ENCODE measurements at regions of chr9 and their contacts with region 1.

Region 1: GRCh38 chr9:134449221-134449894 is 123.1 kb downstream of the RXRA start:
- DNase-seq: peak; percentile 91
- ATAC-seq: peak; percentile 100
- H3K4me3 ChIP-seq: no peak overlapping the region
- H3K4me3 Mint-ChIP-seq: no peak overlapping the region
- H3K27ac ChIP-seq: no peak overlapping the region
- H3K27ac Mint-ChIP-seq: peak overlapping the region; percentile 46
- H3K4me1 ChIP-seq: peaks cover 0 to 11% of the 10 kb centered on the region in 2 donors
- H3K4me1 Mint-ChIP-seq: peaks cover 18% of the 10 kb centered on the region
- H3K27me3 ChIP-seq: peaks cover 0 to 3% (median 0%) of the 10 kb centered on the region in 4 experiments
- H3K27me3 Mint-ChIP-seq: no peaks in the 10 kb centered on the region
- CTCF ChIP-seq: peak; percentile 81

Region 2: GRCh38 chr9:134175808-134176598 is 273.4 kb before region 1 on chr9:
- CTCF ChIA-PET with region 1: interaction called, 59 read pairs
- POLR2A ChIA-PET with region 1: no interaction called
- intact Hi-C with region 1: no loop called
- DNase-seq: no peak
- ATAC-seq: no peak
- H3K4me3 ChIP-seq: no peak overlapping the region
- H3K4me3 Mint-ChIP-seq: no peak overlapping the region
- H3K27ac ChIP-seq: no peak overlapping the region
- H3K27ac Mint-ChIP-seq: no peak overlapping the region
- H3K4me1 ChIP-seq: peaks cover 21 to 23% of the 10 kb centered on the region in 2 donors
- H3K4me1 Mint-ChIP-seq: peaks cover 20% of the 10 kb centered on the region
- H3K27me3 ChIP-seq: peaks cover 0 to 28% (median 8%) of the 10 kb centered on the region in 4 experiments
- H3K27me3 Mint-ChIP-seq: peaks cover 23% of the 10 kb centered on the region
- CTCF ChIP-seq: no peak

Region 3: DNA sequence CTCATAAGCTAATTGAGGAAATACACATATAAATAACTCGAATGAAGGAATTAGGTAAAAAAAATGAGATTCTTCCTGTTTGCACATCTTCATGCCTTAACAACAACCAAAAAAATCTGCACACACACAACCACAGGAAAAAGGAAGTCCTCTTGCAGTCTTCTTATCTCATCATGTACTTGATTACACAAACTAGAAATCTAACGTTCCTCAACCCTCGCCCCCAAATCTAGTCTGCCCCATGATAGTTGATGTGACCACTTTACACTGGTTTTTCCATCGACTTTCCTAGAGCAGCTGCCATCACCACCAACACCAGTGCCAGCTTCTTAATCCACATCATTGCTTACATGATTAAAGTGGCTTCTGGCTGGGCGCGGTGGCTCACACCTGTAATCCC is 253.8 kb before region 1 on chr9:
- CTCF ChIA-PET with region 1: no interaction called
- POLR2A ChIA-PET with region 1: no interaction called
- intact Hi-C with region 1: no loop called
- DNase-seq: no peak
- ATAC-seq: no peak
- H3K4me3 ChIP-seq: no peak overlapping the region
- H3K4me3 Mint-ChIP-seq: peak overlapping the region; percentile 23
- H3K27ac ChIP-seq: no peak overlapping the region
- H3K27ac Mint-ChIP-seq: peak overlapping the region; percentile 12
- H3K4me1 ChIP-seq: peaks cover 5 to 10% of the 10 kb centered on the region in 2 donors
- H3K4me1 Mint-ChIP-seq: peaks cover 5% of the 10 kb centered on the region
- H3K27me3 ChIP-seq: no peaks in the 10 kb centered on the region
- H3K27me3 Mint-ChIP-seq: peaks cover 13% of the 10 kb centered on the region
- CTCF ChIP-seq: no peak

Region 4: GRCh38 chr9:134325817-134326723 is 123.3 kb before region 1 on chr9 and contains the start of gene RXRA:
- CTCF ChIA-PET with region 1: interaction called, 3 read pairs
- POLR2A ChIA-PET with region 1: no interaction called
- intact Hi-C with region 1: loop called (anchors 10 kb)
- DNase-seq: peak; percentile 83
- ATAC-seq: peak; percentile 77
- H3K4me3 ChIP-seq: peak within 1 kb of the TSS; percentile 17 to 85 (median 78)
- H3K4me3 Mint-ChIP-seq: peak within 1 kb of the TSS; percentile 82
- H3K27ac ChIP-seq: no peak within 1 kb of the TSS
- H3K27ac Mint-ChIP-seq: peak within 1 kb of the TSS; percentile 68
- H3K4me1 ChIP-seq: peaks cover 11 to 20% of the 10 kb centered on the region in 2 donors
- H3K4me1 Mint-ChIP-seq: peaks cover 17% of the 10 kb centered on the region
- H3K27me3 ChIP-seq: peaks cover 0 to 13% (median 3%) of the 10 kb centered on the region in 4 experiments
- H3K27me3 Mint-ChIP-seq: no peaks in the 10 kb centered on the region
- CTCF ChIP-seq: no peak
- total RNA-seq, gene RXRA: 6.7 and 6.8 TPM in 2 replicates

Region 5: GRCh38 chr9:134386951-134387831 is 62.2 kb before region 1 on chr9:
- CTCF ChIA-PET with region 1: no interaction called
- POLR2A ChIA-PET with region 1: no interaction called
- intact Hi-C with region 1: no loop called
- DNase-seq: no peak
- ATAC-seq: no peak
- H3K4me3 ChIP-seq: no peak overlapping the region
- H3K4me3 Mint-ChIP-seq: no peak overlapping the region
- H3K27ac ChIP-seq: no peak overlapping the region
- H3K27ac Mint-ChIP-seq: no peak overlapping the region
- H3K4me1 ChIP-seq: peaks cover 34 to 46% of the 10 kb centered on the region in 2 donors
- H3K4me1 Mint-ChIP-seq: peaks cover 33% of the 10 kb centered on the region
- H3K27me3 ChIP-seq: no peaks in the 10 kb centered on the region
- H3K27me3 Mint-ChIP-seq: no peaks in the 10 kb centered on the region
- CTCF ChIP-seq: no peak

Region 6: DNA sequence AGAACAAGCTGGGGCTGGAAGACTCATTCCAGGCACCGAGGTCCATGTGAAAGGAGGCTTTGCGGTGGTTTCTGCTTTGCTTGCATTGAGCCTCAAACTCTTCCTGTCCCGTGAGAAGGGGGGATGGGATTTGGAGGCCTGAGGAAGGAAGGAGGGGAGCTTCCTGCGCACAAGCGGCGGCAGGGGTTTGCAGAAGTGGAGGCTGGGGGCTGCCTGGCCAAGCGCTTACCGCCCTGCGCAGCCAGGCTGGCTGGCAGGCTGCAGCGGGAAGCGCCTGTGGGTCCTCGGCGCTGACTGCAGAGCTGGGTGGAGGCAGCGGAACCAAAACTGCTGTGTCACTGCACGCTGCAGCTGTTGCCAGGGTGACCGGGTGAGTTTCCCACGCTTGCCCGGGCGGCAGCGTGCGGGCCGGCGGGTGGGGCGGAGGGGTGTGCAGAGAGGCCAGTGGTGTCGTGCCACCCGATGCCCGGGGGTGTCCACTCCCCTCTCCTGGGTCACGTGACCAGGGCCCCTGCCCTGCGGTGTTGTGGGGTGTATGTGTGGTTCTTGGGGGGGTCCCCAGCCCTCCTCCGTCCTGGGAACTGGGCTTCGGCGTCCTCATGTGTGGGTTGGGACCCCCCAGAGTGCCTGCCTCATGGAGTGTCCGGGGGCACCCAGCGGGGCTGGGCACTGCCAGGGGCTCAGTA is 42.1 kb before region 1 on chr9:
- CTCF ChIA-PET with region 1: interaction called, 3 read pairs
- POLR2A ChIA-PET with region 1: no interaction called
- intact Hi-C with region 1: loop called (anchors 1 kb)
- DNase-seq: peak; percentile 91
- ATAC-seq: peak; percentile 88
- H3K4me3 ChIP-seq: peak overlapping the region in 4 of 5 experiments; percentile 23 to 49 (median 30)
- H3K4me3 Mint-ChIP-seq: peak overlapping the region; percentile 73
- H3K27ac ChIP-seq: no peak overlapping the region
- H3K27ac Mint-ChIP-seq: peak overlapping the region; percentile 77
- H3K4me1 ChIP-seq: peaks cover 59 to 66% of the 10 kb centered on the region in 2 donors
- H3K4me1 Mint-ChIP-seq: peaks cover 46% of the 10 kb centered on the region
- H3K27me3 ChIP-seq: no peaks in the 10 kb centered on the region
- H3K27me3 Mint-ChIP-seq: no peaks in the 10 kb centered on the region
- CTCF ChIP-seq: no peak

Region 7: DNA sequence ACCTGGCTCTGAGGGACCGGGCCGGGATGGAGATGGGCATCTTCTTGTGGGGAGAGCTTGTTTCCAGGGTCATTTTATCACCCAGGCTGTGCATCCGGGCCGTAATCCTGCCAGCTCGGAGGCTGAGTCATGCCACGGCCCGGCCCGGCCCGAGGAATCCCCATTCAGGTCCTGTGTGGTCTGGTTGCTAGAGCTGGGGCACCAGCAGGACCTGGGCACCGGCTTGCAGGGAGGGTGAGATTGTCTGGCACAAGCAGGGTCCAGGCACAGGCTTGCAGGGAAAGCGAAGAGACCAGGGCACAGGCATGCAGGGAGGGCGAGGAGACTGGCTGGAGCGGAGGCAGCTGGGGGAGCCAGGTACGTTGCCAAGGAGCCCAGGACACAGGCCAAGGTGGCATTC is 16.3 kb before region 1 on chr9:
- CTCF ChIA-PET with region 1: no interaction called
- POLR2A ChIA-PET with region 1: no interaction called
- intact Hi-C with region 1: no loop called
- DNase-seq: no peak
- ATAC-seq: no peak
- H3K4me3 ChIP-seq: no peak overlapping the region
- H3K4me3 Mint-ChIP-seq: no peak overlapping the region
- H3K27ac ChIP-seq: no peak overlapping the region
- H3K27ac Mint-ChIP-seq: no peak overlapping the region
- H3K4me1 ChIP-seq: no peaks in the 10 kb centered on the region
- H3K4me1 Mint-ChIP-seq: no peaks in the 10 kb centered on the region
- H3K27me3 ChIP-seq: no peaks in the 10 kb centered on the region
- H3K27me3 Mint-ChIP-seq: no peaks in the 10 kb centered on the region
- CTCF ChIP-seq: no peak

Region 8: DNA sequence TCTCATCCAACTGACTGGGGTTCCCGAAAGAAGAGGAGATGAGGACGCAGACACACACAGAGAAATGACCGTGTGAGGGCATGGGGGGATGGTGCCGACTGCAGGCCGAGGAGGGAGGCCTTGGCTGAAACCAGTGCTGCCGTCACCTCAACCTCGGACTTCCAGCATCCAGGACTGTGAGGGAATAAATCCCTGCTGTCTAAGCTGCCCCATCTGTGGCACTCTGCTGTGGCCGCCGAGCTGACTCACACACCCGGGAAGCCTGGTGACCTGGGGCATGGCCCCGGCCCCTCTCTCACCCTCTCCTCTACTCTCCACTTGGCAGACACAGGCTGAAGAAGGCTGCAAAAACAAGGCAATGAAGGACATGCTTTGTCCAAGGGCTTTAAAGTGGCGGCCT is 187.9 kb after region 1 on chr9:
- CTCF ChIA-PET with region 1: no interaction called
- POLR2A ChIA-PET with region 1: no interaction called
- intact Hi-C with region 1: no loop called
- DNase-seq: no peak
- ATAC-seq: no peak
- H3K4me3 ChIP-seq: no peak overlapping the region
- H3K4me3 Mint-ChIP-seq: no peak overlapping the region
- H3K27ac ChIP-seq: no peak overlapping the region
- H3K27ac Mint-ChIP-seq: no peak overlapping the region
- H3K4me1 ChIP-seq: peaks cover 0 to 4% of the 10 kb centered on the region in 2 donors
- H3K4me1 Mint-ChIP-seq: peaks cover 6% of the 10 kb centered on the region
- H3K27me3 ChIP-seq: peaks cover 0 to 10% (median 2%) of the 10 kb centered on the region in 4 experiments
- H3K27me3 Mint-ChIP-seq: peaks cover 8% of the 10 kb centered on the region
- CTCF ChIP-seq: no peak

Region 9: GRCh38 chr9:134738869-134739659 is 289.7 kb after region 1 on chr9:
- CTCF ChIA-PET with region 1: interaction called, 19 read pairs
- POLR2A ChIA-PET with region 1: no interaction called
- intact Hi-C with region 1: no loop called
- DNase-seq: peak; percentile 33
- ATAC-seq: peak; percentile 31
- H3K4me3 ChIP-seq: no peak overlapping the region
- H3K4me3 Mint-ChIP-seq: no peak overlapping the region
- H3K27ac ChIP-seq: no peak overlapping the region
- H3K27ac Mint-ChIP-seq: no peak overlapping the region
- H3K4me1 ChIP-seq: no peaks in the 10 kb centered on the region
- H3K4me1 Mint-ChIP-seq: no peaks in the 10 kb centered on the region
- H3K27me3 ChIP-seq: peaks cover 0 to 4% (median 0%) of the 10 kb centered on the region in 4 experiments
- H3K27me3 Mint-ChIP-seq: no peaks in the 10 kb centered on the region
- CTCF ChIP-seq: peak; percentile 68

Region 10: DNA sequence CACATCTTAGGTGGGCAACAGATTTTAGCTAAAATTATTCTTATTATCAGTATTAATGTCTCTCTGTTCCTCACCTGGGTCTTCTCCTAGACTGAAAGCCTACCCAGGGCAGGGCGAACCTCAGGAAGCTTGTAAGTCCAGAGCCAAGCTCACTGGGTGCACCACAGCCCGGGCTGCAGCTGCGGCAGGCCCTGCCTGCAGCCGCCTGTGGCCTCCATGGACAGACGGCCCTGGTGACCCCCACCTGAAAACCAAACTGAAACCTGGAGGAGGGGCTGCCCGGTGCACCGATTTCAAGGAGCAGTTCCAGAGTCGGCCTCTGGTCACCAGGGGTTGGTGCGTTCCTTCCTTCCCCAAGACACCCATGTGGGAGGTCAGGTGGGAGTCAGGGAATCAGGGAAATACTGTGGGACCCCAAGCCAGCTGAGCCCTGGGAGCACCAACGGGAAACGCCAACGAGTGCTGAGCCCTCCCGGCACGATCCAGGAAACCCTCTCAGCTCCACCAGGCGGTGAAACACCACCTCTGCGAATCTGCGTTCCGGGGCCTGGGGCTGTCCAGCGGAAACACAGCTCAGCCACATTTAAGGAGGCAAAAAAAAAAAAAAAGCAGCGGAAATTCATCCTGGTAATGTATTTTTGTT is 961.6 kb after region 1 on chr9:
- CTCF ChIA-PET with region 1: interaction called, 34 read pairs
- POLR2A ChIA-PET with region 1: no interaction called
- intact Hi-C with region 1: no loop called
- DNase-seq: no peak
- ATAC-seq: no peak
- H3K4me3 ChIP-seq: no peak overlapping the region
- H3K4me3 Mint-ChIP-seq: no peak overlapping the region
- H3K27ac ChIP-seq: no peak overlapping the region
- H3K27ac Mint-ChIP-seq: no peak overlapping the region
- H3K4me1 ChIP-seq: no peaks in the 10 kb centered on the region
- H3K4me1 Mint-ChIP-seq: no peaks in the 10 kb centered on the region
- H3K27me3 ChIP-seq: peaks cover 0 to 13% (median 0%) of the 10 kb centered on the region in 4 experiments
- H3K27me3 Mint-ChIP-seq: peaks cover 16% of the 10 kb centered on the region
- CTCF ChIP-seq: no peak